WTC11 (cell line): ENCODE measurements at regions of chr4 and their contacts with region 1.

Region 1: GRCh38 chr4:82044142-82044993 is 329.4 kb downstream of the HNRNPD start:
- DNase-seq: peak; percentile 80
- ATAC-seq: peak; percentile 79
- H3K4me3 Mint-ChIP-seq: peak overlapping the region; percentile 81
- H3K27ac Mint-ChIP-seq: no peak overlapping the region
- H3K4me1 Mint-ChIP-seq: peaks cover 25% of the 10 kb centered on the region
- H3K27me3 Mint-ChIP-seq: peaks cover 37% of the 10 kb centered on the region
- CTCF ChIP-seq: no peak

Region 2: GRCh38 chr4:82017680-82018079 is 26.7 kb before region 1 on chr4:
- CTCF ChIA-PET with region 1: no interaction called
- POLR2A ChIA-PET with region 1: no interaction called
- DNase-seq: no peak
- ATAC-seq: no peak
- H3K4me3 Mint-ChIP-seq: no peak overlapping the region
- H3K27ac Mint-ChIP-seq: no peak overlapping the region
- H3K4me1 Mint-ChIP-seq: no peaks in the 10 kb centered on the region
- H3K27me3 Mint-ChIP-seq: 0 out of 2 replicates have a peak, but pooled peaks cover 3% of the 10 kb centered on the region
- CTCF ChIP-seq: no peak

Region 3: DNA sequence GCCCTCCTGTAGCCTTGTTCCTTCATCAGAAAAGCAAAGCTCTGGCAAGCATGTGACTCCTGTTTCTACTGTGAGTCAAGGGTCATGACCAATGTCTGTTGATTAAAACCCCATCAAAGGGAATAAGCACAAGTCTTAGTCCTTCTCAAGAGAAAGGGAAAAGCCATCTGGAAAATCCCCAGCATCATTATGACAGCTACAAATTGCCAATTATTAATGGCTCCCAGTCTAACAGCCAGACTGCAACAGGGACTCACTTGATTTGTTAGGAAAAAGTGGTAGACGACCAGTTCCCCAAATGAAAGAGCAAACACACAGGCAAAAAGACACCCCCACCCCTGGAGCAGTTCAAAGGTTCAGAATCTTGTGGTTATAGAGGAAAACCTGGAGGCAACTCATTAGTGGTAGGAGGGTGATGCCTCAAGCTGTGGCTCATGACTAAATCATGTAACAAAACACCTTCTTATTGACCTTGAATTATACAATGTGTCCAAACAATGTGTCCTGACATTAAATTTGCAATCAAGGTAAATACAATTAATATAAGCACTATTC is 13.7 kb after region 1 on chr4:
- CTCF ChIA-PET with region 1: no interaction called
- POLR2A ChIA-PET with region 1: interaction called, 10 read pairs
- DNase-seq: no peak
- ATAC-seq: no peak
- H3K4me3 Mint-ChIP-seq: no peak overlapping the region
- H3K27ac Mint-ChIP-seq: no peak overlapping the region
- H3K4me1 Mint-ChIP-seq: peaks cover 2% of the 10 kb centered on the region; the same call in 1 of the 2 replicates
- H3K27me3 Mint-ChIP-seq: no peaks in the 10 kb centered on the region
- CTCF ChIP-seq: no peak